ENCODE measurements at regions of chr17 and their contacts with region 1.

Region 1: GRCh38 chr17:73429440-73430164 is 117.8 kb upstream of the CDC42EP4 start:
- H3K4me3 Mint-ChIP-seq: no peak overlapping the region
- H3K27ac Mint-ChIP-seq: peak overlapping the region; percentile 45
- H3K4me1 Mint-ChIP-seq: peaks cover 23% of the 10 kb centered on the region
- H3K27me3 Mint-ChIP-seq: peaks cover 11% of the 10 kb centered on the region

Region 2: DNA sequence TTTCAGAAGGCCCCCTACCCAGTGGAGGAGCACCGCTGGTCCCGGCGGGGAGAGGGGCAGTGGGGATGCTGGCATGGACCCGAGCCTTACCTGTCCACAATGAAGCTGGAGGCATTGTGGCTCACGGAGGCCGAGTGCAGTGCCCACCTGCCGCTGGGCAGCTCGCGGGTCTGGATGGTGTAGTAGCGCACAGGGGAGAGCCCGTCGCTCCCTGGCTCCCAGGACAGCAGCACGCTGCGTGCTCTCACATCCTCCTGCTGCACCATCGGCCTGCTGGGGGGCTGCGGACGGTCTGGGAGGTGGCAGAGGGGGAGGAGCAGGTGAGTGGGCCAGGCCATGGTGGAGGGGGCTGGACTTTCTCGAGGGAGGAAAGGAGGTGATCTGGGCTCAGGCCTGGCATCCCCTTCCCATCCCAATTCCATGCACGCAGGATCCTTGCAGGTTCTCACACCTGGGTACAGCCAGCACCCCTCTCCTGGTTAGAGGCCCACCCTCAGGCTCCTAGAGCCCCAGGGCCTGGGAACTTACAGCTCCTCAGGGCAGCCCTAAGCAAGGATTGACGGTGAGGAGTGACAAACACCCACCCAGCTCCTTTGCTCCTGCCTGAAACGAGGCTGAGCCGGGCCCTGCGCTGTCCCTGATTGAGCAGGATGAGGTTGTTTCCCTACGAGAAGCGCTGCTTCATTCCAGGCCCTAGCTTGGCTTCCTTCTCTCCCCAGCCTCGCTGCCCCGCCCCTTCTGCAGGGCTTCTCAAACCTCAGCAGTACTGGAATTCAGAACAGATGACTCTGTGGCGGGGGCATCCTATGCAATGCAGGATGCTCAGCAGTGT is 41.6 kb before region 1 on chr17:
- intact Hi-C with region 1: no loop called
- H3K4me3 Mint-ChIP-seq: no peak overlapping the region
- H3K27ac Mint-ChIP-seq: no peak overlapping the region
- H3K4me1 Mint-ChIP-seq: no peaks in the 10 kb centered on the region
- H3K27me3 Mint-ChIP-seq: no peaks in the 10 kb centered on the region

Region 3: DNA sequence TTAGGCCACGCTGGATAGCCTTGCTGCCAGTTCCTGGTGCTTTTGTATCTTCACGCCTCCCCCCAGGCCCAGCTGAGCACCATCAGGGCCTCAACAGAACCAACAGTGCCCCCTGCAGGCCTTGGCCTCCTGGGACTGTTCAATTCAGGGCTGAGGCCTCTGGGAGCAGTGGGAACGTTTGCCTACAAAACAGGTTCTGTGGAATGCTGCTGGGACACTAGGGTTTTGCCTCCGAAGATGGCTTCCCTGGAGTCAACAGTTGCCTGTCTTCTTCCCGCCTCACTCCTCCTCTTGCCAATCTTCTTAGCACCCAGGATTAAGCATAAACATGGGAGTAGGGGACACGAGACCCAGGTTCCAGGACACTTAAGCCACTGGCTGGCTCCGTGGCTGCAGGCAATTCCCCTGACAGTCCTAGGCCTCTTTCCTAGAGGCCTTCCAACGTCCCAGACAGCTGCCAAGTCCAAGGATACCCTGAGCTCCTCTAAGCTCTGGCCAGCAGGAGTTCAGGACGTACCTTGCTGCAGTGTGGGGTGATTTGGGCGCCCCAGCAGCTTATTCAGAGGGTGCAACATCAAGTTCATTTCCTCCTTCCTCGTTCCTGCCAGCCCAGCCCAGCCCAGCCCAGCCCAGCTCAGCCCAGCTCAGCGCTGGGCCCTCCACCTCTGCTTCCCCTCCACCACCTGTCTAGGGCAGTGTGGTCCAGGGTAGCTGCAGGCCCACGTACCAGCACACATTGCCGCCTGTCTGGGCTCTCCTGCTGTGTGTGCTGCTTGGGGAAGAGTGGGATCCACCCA is 527.3 kb after region 1 on chr17:
- intact Hi-C with region 1: loop called (anchors 1 kb)
- H3K4me3 Mint-ChIP-seq: no peak overlapping the region
- H3K27ac Mint-ChIP-seq: no peak overlapping the region
- H3K4me1 Mint-ChIP-seq: peaks cover 5% of the 10 kb centered on the region
- H3K27me3 Mint-ChIP-seq: peaks cover 2% of the 10 kb centered on the region

Measured in dendritic cell treated with granulocyte-macrophage colony-stimulating factor and Interleukin-4, amounts not matched to agents 40 ng/mL and 50 ng/mL, for 4 days (primary cell).